Calu3 (cell line): ENCODE measurements at regions of chr9 and their contacts with region 1.

Region 1: DNA sequence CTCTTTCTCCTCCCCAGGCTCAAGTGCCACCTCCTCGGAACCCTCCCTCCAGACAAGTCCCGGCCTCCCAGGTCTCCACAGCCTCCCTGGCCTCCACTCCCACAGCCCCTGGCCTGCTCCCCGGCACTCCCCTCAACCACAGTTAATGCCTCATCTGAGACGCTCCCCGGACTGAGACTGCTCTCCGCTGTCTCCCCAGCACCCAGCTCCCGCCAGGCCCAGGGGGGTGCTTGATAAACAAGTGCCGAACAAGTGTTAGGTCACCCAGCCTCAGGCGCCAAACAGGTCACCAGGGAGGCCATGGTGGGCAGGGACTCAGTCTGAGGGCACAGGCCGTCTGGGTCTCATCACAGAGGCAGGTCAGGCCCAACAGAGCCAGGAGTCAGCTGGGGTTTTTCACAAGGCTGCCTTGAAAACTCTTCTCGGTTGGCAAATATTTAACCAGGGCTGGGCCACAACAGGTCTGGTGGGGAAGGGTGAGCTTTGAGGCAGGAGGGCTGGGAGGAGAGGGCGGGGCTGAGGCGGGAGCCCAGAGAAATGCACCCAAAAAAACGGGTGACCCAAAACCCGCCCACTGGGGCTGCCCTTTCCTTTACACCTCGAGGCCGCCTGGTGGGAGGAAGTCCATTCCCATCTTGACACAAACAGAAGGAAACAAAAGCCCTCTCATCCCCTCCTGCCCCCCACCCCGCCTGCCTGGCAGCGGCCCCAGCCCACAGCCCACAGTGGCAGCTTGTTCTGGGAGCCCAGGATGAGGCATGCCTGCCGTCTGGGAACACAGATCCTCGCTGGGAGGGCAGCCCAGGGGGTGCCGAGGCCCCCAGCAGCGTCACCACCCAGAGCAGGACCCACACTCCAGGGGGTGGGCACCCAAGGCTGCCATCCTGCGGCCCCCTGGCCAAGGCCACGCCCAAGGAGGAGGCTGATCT is 66.6 kb upstream of the STXBP1 start:
- DNase-seq: peak; percentile 94
- H3K4me3 Mint-ChIP-seq: peak overlapping the region; percentile 67
- H3K27ac Mint-ChIP-seq: peak overlapping the region; percentile 86
- H3K4me1 Mint-ChIP-seq: peaks cover 64% of the 10 kb centered on the region
- H3K27me3 Mint-ChIP-seq: no peaks in the 10 kb centered on the region
- CTCF ChIP-seq: no peak

Region 2: DNA sequence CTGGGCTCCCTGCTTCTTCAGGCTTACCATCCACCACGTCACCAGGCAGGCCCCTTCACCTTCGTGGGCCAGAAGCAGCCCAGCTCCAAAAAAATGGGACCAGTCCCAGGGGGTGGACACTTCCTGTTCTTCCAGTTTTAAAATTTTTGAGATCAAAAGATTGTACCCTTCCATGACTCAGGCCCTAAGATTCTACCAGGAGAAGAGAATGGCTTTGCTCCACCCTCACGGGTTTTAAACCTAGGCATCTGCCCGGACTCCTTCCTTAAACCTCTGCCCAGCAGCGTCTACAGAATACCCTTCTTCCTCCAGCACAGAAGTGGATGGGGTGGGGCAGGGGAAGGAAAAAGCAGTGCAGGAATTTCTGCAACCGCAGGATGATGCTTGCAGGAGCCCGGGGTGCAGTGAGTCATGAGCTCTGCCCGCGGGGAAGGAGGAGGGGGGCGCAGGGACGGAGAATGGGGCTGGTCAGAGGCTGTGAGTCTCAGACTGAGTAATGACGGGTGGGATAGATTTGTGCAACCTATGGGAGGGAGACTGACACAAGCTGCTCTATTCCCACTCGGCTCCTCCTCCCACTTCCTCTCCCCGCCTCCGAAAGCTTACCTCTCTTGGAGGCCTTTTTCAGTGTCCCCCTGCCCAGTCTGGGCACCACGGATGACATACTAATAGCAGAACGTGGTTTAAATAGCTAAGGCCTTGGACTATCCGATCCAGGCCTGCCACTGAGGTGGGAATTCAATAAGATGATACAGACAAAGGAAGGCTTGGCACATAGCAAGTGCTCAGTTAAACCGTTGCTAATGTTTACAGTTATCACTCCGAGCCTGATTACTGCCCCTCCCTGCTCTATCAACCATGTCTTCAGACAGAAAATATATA is 16.4 kb after region 1 on chr9:
- CTCF ChIA-PET with region 1: interaction called, 11 read pairs
- intact Hi-C with region 1: no loop called
- DNase-seq: peak; percentile 91
- H3K4me3 Mint-ChIP-seq: peak overlapping the region; percentile 35
- H3K27ac Mint-ChIP-seq: peak overlapping the region; percentile 70
- H3K4me1 Mint-ChIP-seq: peaks cover 44% of the 10 kb centered on the region
- H3K27me3 Mint-ChIP-seq: no peaks in the 10 kb centered on the region
- CTCF ChIP-seq: no peak